RWPE1 (cell line): ENCODE measurements at regions of chr5 and their contacts with region 1.

Region 1: GRCh38 chr5:154520861-154521453 is 42.9 kb upstream of the HAND1 start:
- DNase-seq: peak; percentile 84
- H3K27ac ChIP-seq: no peak overlapping the region
- CTCF ChIP-seq: peak; percentile 94

Region 2: DNA sequence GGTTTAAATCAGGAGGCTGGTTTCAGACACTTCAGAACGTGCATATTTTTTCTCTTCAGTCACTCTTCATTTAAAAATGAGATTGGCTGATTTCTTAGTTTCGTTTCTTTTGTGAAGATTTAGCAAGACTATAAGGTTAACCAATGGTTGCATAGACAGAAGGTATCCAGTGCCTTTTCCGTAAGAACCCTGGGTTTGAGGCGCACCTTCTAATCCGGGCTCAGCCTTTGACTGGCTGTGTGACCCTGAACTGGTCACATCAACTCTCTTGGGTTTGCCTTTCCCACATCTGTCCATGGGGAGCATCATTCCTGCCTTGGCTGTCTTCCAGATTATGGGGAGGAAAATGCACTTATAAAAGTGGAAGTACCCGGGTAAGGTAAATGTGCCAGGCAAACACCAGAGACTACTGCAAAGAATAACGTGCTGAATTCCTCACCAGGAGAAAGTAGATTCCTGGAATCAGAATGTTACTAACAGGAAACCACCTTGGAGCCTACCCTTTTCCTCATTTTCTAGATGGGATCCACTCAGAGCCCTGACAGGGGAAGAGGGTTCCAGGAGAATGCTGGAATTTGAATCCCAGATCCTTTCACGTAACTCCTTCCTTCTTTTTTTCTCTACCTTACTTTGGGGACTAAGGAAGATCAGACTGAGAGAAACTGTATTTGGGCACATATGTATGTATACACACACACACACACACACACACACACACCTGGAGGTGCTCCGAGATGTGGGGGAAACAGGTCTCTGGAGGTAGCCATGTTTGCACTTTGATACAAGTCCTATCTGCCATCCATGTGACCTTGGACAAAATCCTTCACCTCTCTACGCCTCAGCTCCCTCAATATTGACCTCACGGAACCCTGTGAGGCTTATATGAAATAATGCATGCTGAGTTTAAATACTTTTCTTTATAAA is 49.7 kb before region 1 on chr5:
- CTCF ChIA-PET with region 1: interaction called, 13 read pairs
- POLR2A ChIA-PET with region 1: interaction called, 5 read pairs
- DNase-seq: no peak
- H3K27ac ChIP-seq: no peak overlapping the region
- CTCF ChIP-seq: no peak

Region 3: DNA sequence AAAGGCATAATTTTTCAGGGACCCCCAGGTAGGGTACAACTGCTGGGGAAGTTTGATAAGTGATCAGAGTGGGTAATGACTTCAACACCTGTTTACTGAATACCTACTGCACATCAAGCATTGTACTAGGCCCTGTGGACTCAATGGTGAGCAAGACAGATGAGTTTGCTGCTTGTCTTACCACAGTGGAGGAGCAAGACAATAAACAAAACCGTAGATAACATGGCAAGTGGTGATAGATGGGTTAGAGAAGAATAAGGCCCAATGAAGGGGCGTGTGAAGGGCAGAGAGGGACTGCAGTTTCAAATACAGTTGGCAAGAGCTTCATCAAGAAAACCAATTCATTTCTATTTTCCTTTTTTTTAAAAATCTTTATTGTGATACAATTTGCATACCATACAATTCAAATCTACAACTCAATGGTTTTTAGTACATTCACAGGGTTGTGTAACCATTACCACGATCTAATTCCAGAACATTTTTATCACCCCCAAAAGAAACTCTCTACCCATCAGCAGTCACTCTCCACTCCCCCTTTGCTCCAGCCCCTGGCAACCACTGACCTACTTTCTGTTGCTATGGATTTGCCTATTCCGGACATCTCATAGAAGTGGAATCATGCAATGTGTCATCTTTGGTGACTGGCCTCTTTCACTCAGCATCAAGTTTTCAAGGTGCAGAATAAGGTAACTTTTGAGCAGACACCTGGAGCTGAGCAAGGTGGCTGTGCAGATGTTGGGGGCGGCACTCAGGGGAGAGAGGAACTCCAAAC is 11.0 kb before region 1 on chr5:
- CTCF ChIA-PET with region 1: interaction called, 13 read pairs
- POLR2A ChIA-PET with region 1: no interaction called
- DNase-seq: no peak
- H3K27ac ChIP-seq: no peak overlapping the region
- CTCF ChIP-seq: no peak

Region 4: GRCh38 chr5:154610321-154611154 is 89.6 kb after region 1 on chr5:
- CTCF ChIA-PET with region 1: interaction called, 40 read pairs
- POLR2A ChIA-PET with region 1: no interaction called
- DNase-seq: peak; percentile 91
- H3K27ac ChIP-seq: no peak overlapping the region
- CTCF ChIP-seq: peak; percentile 86

Region 5: DNA sequence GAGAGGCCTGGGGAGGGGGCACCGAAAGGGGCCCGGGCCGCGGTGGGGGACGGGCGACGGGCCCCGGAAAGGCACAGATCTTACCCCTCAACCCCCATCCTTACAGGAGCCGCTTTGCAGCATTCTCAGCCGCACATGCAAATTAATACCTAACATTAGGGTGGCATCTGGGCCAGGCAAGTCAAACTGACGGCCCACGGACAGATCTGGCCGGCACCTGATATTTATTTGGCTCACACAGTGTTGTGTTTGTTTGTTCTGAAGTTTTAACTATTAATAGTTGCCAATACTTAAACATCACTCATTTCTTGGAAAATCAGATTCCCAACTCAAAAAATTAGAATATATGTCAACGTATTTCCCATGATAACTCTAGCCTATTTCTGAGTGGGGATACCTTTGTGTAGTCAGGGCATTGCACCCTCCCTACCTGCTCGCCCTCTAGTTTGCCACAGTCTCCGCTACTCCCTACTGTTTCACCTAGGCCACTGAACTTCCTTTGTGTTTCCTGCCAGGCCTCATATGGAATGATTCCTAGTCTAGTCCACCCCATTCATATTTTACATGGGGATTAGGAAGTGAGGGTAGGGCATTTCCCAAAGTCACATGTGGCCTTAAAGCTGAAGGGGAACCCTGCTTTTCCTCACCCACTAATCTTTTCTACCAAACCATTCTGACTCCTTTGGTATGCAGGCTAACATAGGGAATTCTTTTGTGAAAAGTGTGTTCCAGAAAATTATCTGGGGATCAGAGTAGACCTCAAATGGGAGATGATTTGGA is 162.3 kb after region 1 on chr5:
- CTCF ChIA-PET with region 1: no interaction called
- POLR2A ChIA-PET with region 1: no interaction called
- DNase-seq: no peak
- H3K27ac ChIP-seq: peak overlapping the region; percentile 84
- CTCF ChIP-seq: no peak

Region 6: DNA sequence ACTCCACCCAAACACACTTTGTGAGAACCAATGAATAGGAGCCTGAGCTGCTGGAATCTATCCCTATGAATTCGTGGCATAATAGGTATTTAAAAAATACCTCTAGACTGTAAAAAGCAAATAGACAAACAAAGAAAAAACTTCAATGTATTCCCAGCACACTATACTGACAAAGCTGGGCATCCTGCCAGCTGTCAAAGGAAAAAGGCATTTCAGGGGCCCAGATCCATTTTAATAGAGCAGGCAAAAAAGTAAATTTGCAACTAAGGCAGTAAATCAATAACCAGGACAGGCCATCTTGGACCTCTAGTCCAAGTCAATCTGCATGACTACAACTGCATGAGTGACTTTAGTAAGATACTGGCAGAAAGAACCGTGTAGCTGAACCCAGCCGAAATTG is 208.7 kb after region 1 on chr5:
- CTCF ChIA-PET with region 1: no interaction called
- POLR2A ChIA-PET with region 1: interaction called, 11 read pairs
- DNase-seq: no peak
- H3K27ac ChIP-seq: no peak overlapping the region
- CTCF ChIP-seq: no peak